Posterior vena cava (tissue), 2 donors: ENCODE measurements at regions of chr6 and their contacts with region 1.

Region 1: DNA sequence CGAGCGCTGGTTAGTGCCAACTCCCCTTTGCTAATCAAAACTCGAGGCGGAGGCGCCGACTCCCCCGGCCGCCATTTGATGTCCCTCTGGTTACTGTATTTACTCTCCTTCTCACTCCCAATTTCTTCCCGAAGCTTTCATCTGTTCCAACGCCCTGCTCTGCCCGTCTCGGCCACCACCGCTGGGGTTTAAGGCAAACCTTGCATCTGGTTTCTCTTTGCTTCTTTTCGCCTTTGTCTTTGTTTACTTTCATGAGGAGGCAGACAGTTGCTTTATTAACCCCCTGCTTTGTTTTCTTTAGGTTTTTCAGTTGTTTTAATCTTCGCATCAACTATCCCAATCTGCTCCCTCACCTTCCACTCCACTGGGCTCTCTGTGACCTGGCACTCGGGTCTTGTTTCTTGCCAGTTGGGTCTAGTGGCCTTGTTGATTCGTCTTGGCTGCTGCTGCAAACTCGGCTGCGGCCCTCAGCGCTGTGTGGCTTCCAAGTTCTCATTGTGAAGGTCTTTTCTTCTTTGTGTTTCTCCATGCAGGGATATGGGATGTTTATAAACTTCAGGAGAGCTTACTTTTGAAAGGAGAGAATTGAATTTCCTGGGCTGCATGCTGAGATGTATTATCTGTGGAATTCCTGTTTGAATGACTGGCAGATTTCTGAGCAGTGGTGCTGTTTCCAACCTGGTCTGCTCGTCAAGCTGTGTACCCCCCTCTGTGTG is 155.1 kb downstream of the CDC5L start:
- DNase-seq: no peak

Region 2: DNA sequence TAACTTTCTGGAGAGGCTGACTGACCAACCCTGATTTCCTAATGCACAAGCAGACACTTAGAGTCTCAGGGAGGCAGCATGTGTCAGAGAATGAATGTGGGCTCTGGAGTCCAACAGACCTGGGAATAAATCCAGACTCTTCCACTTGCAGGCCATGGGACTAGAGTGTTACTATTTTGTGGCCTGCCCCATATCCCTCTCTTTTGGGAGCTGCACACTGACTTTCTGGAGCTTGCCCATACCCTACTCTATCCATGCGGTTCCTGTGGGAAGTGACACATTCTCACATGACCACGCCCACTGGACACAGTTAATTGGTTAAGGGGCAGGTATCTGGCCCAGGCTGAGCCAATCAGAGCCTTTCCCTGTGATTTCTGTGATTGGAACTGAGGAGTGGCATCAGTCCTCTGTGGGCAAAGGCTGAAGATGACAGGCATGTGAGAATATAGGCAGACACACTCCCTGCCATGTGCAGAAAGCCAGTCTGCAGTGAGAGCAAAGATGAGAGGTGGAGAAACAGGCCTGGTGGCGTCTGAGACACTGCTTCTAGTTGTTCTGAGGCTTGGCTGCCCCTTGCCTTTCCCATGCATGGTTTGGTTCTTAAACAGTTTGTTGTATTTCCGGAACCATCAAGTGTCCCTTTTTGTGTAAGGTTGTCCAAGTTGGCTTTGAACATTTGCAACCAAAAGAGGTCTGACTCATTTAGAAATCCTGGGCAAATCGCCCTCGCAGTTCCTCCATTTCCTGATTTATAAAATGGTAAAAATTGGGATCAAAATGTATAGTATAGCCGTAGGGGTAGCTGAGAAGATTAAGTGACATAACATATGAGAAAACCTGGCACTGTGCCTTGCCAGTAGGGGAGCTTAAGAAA is 29.5 kb before region 1 on chr6:
- intact Hi-C with region 1: no loop called
- DNase-seq: no peak

Region 3: DNA sequence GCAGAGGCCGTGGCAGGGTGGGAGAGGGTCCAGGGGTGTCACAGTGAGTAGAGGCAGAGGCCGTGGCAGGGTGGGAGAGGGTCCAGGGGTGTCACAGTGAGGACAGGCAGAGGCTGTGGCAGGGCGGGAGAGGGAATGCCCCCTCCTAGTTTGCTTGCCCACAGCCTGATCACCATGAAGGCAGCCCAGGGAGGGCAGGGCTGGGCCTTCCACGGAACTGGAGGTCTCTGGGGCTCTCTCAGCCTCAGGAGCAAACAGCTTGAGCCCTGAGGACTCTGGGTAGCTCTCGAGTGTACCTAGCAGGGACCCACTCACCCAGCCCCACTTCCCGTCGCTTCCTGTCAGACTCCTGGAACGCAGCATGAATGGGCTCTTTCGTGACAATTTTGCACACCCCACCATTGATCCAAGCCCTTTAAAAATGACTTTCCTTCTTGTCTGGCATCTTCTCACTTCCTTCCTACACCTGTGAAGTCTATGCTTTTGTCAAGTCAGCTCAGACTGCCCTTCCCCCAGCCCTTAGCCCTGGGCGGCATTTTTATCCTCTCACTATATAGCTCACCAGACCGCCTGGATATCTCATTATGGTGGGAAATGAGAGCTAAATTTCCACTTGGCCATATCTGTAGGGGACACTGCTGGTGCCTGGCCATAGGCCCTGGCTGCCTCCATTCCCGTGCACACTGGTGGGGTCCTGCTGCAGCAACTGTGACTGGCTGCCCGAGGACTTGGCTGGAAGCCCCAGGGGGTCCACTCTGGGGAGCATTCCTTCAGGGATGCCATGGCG is 14.8 kb before region 1 on chr6:
- intact Hi-C with region 1: loop called in 1 of 2 experiments (anchors 2 kb)
- DNase-seq: no peak